A549 (cell line): ENCODE measurements at regions of chr18 and their contacts with region 1.

Region 1: DNA sequence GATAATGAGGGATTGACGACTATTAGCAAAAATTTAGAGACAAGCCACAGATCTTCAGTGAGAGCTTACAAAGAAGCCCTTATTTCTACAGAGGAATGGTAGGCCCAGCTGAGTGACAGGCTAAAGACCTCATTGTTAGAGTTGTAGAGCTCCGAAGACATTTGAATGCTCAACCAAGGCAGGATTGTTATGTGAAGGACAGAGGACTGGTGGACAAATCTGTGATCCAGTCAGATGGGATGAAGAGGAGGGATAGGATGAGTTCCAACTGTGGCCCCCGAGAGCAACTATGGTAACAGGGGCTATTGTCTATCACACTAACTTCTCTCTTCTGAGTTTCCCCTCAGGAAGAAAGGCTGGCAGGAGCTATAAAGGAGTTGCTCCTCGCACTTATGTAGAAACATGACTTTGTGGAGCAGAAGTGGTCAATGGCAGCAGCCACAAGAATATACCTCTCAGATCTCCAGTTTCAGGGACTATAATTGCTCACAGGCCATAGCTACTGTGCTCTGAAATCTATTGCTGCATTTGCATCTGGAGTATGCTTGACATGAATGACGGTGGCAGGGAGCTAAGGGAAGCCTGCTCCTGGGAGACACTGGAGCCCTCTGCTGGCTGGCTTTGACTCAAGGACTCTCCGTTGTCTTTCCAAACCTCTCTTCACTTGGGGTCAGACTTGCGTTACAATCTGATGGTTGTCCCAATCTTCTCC is 50.3 kb upstream of the GREB1L start:
- DNase-seq: peak; percentile 20 to 67
- ATAC-seq: peak; percentile 80 to 91; a peak in 5 of 6 replicates
- H3K4me3 ChIP-seq: no peak overlapping the region
- H3K27ac ChIP-seq: no peak overlapping the region
- H3K4me1 ChIP-seq: no peaks in the 10 kb centered on the region
- CTCF ChIP-seq: peak; percentile 42
- EP300 ChIP-seq: no peak
- POLR2A ChIP-seq: no peak
- RAD21 ChIP-seq: peak; percentile 39 to 59; a peak in 4 of 5 replicates

Region 2: GRCh38 chr18:21110664-21111340 is 81.0 kb before region 1 on chr18:
- CTCF ChIA-PET with region 1: no interaction called
- POLR2A ChIA-PET with region 1: no interaction called
- DNase-seq: peak in 1 of 2 experiments; percentile 19
- ATAC-seq: peak; percentile 20 to 37; a peak in 5 of 6 replicates
- H3K4me3 ChIP-seq: peak overlapping the region; percentile 99
- H3K27ac ChIP-seq: peak overlapping the region; percentile 98 to 100
- H3K4me1 ChIP-seq: peaks cover 30% of the 10 kb centered on the region
- CTCF ChIP-seq: no peak
- EP300 ChIP-seq: no peak
- POLR2A ChIP-seq: no peak
- RAD21 ChIP-seq: no peak

Region 3: GRCh38 chr18:21179590-21180220 is 12.0 kb before region 1 on chr18:
- CTCF ChIA-PET with region 1: interaction called, 17 read pairs
- POLR2A ChIA-PET with region 1: no interaction called
- DNase-seq: peak; percentile 25 to 52
- ATAC-seq: peak in 1 of 2 experiments; percentile 71; a peak in 3 of 6 replicates
- H3K4me3 ChIP-seq: no peak overlapping the region
- H3K27ac ChIP-seq: no peak overlapping the region
- H3K4me1 ChIP-seq: no peaks in the 10 kb centered on the region
- CTCF ChIP-seq: peak; percentile 62
- EP300 ChIP-seq: no peak
- POLR2A ChIP-seq: no peak
- RAD21 ChIP-seq: peak; percentile 70 to 71

Region 4: GRCh38 chr18:21433436-21433835 is 241.7 kb after region 1 on chr18:
- CTCF ChIA-PET with region 1: interaction called, 13 read pairs
- POLR2A ChIA-PET with region 1: no interaction called
- DNase-seq: no peak
- ATAC-seq: no peak
- H3K4me3 ChIP-seq: no peak overlapping the region
- H3K27ac ChIP-seq: no peak overlapping the region
- H3K4me1 ChIP-seq: no peaks in the 10 kb centered on the region
- CTCF ChIP-seq: no peak
- EP300 ChIP-seq: no peak
- POLR2A ChIP-seq: no peak
- RAD21 ChIP-seq: no peak

Region 5: DNA sequence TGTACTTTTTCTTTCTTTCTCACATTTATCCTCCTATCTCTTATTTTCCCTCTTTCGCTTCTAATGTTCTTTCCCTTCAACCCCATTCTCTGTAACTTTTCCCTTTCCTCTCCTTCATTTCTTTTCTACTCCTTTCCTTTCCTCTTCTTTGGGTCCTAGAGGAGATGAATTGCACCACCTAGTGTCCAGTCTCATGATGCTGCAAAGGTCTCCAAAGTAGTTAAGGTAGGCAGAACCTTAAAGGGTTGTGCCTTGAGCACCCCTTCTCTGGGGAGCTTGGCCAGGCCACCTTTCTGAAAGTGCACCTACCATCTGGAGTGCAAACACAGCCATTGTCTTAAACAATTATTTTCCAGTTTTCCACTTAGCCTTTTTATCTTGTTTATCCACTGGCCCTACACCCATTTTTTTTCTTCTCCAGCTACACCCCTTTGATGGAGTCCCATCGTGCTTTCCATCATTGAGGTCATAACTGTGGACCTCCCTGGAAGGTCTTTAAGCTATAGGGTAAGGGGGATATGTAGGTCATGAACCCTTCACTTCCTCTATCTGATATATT is 252.8 kb after region 1 on chr18:
- CTCF ChIA-PET with region 1: interaction called, 82 read pairs
- POLR2A ChIA-PET with region 1: no interaction called
- DNase-seq: peak; percentile 32 to 69
- ATAC-seq: peak in 1 of 2 experiments; percentile 83; a peak in 3 of 6 replicates
- H3K4me3 ChIP-seq: no peak overlapping the region
- H3K27ac ChIP-seq: no peak overlapping the region; a peak in 1 of 6 replicates
- H3K4me1 ChIP-seq: peaks cover 8% of the 10 kb centered on the region; the same call in 2 of the 3 replicates
- CTCF ChIP-seq: peak; percentile 69
- EP300 ChIP-seq: no peak
- POLR2A ChIP-seq: no peak
- RAD21 ChIP-seq: peak; percentile 78 to 82

Region 6: GRCh38 chr18:21452796-21453510 is 261.2 kb after region 1 on chr18:
- CTCF ChIA-PET with region 1: interaction called, 18 read pairs
- POLR2A ChIA-PET with region 1: no interaction called
- DNase-seq: no peak
- ATAC-seq: no peak
- H3K4me3 ChIP-seq: no peak overlapping the region
- H3K27ac ChIP-seq: no peak overlapping the region
- H3K4me1 ChIP-seq: no peaks in the 10 kb centered on the region
- CTCF ChIP-seq: no peak
- EP300 ChIP-seq: no peak
- POLR2A ChIP-seq: no peak
- RAD21 ChIP-seq: no peak

Region 7: DNA sequence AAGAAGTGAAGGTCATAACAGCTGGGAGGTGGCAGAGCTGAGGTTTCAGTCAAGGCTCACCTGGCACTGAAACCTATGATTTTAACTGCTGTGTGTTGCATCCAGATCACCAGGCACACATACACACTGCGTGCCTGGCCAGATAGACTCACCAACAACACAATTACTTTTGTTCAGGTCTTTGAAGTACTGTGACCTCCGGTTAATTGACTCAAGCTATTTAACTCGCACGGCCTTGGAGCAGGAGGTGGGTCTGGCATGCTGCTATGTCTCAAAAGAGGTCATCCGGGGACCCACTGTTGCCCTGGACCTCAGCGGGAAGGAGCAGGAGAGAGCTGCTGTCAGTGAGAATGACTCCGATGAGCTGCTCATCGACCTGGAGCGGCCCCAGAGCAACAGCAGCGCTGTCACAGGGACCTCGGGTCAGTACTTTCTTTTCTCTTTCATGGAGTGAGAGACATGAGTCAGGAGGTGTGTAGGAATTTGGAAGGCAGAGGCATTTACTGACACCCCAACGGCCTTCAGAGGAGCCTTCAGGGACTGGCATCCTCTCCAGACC is 304.6 kb after region 1 on chr18:
- CTCF ChIA-PET with region 1: interaction called, 10 read pairs
- POLR2A ChIA-PET with region 1: no interaction called
- DNase-seq: no peak
- ATAC-seq: no peak
- H3K4me3 ChIP-seq: no peak overlapping the region
- H3K27ac ChIP-seq: no peak overlapping the region
- H3K4me1 ChIP-seq: no peaks in the 10 kb centered on the region
- CTCF ChIP-seq: no peak
- EP300 ChIP-seq: no peak
- POLR2A ChIP-seq: no peak
- RAD21 ChIP-seq: no peak

Region 8: GRCh38 chr18:21600526-21601410 is 409.0 kb after region 1 on chr18 and contains the start of gene ESCO1:
- CTCF ChIA-PET with region 1: interaction called, 14 read pairs
- POLR2A ChIA-PET with region 1: interaction called, 5 read pairs
- DNase-seq: peak; percentile 81 to 99
- ATAC-seq: peak; percentile 93 to 94
- H3K4me3 ChIP-seq: peak within 1 kb of the TSS; percentile 77
- H3K27ac ChIP-seq: peak within 1 kb of the TSS; percentile 90 to 98
- H3K4me1 ChIP-seq: peaks cover 11% of the 10 kb centered on the region; the same call in 1 of the 3 replicates
- CTCF ChIP-seq: peak; percentile 88
- EP300 ChIP-seq: no peak
- POLR2A ChIP-seq: peak; percentile 86
- RAD21 ChIP-seq: peak; percentile 30 to 41; a peak in 3 of 5 replicates
- polyA plus RNA-seq, gene ESCO1: 9.1 and 13.2 TPM in 2 replicates